Activated B cell treated with CpG ODN at 0.5 μM for 24 hours (primary cell): ENCODE measurements at regions of chr11 and their contacts with region 1.

Region 1: GRCh38 chr11:59753650-59754493 is 1.3 kb upstream of the STX3 start:
- DNase-seq: peak; percentile 73
- ATAC-seq: peak; percentile 66
- H3K4me3 Mint-ChIP-seq: peak overlapping the region; percentile 90
- H3K27ac Mint-ChIP-seq: peak overlapping the region; percentile 62
- H3K4me1 Mint-ChIP-seq: peaks cover 28% of the 10 kb centered on the region
- H3K27me3 Mint-ChIP-seq: peaks cover 9% of the 10 kb centered on the region
- CTCF ChIP-seq: peak; percentile 79

Region 2: GRCh38 chr11:59542142-59542810 is 211.6 kb before region 1 on chr11:
- CTCF ChIA-PET with region 1: interaction called, 4 read pairs
- POLR2A ChIA-PET with region 1: no interaction called
- intact Hi-C with region 1: loop called (anchors 1 kb)
- DNase-seq: no peak
- ATAC-seq: no peak
- H3K4me3 Mint-ChIP-seq: no peak overlapping the region
- H3K27ac Mint-ChIP-seq: no peak overlapping the region
- H3K4me1 Mint-ChIP-seq: peaks cover 3% of the 10 kb centered on the region
- H3K27me3 Mint-ChIP-seq: no peaks in the 10 kb centered on the region
- CTCF ChIP-seq: no peak

Region 3: DNA sequence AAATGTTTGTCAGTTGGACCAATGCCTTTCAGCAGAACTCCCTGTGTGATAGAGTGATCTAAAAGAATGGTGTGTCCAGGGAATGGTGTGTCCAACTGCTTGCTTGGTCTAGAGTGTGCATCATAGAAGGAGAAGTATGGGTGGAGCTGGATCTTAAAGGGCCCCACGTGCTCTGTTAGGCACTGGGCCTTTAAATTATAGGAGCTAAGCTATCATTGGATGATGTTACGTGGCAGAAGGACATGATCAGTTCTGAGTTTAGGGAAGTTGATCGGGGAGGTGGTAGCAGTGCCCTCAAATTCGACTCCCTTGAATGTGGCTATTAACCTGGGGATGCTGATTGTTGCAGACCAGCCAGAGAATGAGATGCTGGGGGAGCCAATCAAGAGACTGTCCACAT is 17.7 kb after region 1 on chr11:
- CTCF ChIA-PET with region 1: interaction called, 16 read pairs
- POLR2A ChIA-PET with region 1: interaction called, 43 read pairs
- intact Hi-C with region 1: loop called (anchors 1 kb)
- DNase-seq: no peak
- ATAC-seq: no peak
- H3K4me3 Mint-ChIP-seq: peak overlapping the region; percentile 62
- H3K27ac Mint-ChIP-seq: peak overlapping the region; percentile 92
- H3K4me1 Mint-ChIP-seq: peaks cover 35% of the 10 kb centered on the region
- H3K27me3 Mint-ChIP-seq: no peaks in the 10 kb centered on the region
- CTCF ChIP-seq: no peak

Region 4: DNA sequence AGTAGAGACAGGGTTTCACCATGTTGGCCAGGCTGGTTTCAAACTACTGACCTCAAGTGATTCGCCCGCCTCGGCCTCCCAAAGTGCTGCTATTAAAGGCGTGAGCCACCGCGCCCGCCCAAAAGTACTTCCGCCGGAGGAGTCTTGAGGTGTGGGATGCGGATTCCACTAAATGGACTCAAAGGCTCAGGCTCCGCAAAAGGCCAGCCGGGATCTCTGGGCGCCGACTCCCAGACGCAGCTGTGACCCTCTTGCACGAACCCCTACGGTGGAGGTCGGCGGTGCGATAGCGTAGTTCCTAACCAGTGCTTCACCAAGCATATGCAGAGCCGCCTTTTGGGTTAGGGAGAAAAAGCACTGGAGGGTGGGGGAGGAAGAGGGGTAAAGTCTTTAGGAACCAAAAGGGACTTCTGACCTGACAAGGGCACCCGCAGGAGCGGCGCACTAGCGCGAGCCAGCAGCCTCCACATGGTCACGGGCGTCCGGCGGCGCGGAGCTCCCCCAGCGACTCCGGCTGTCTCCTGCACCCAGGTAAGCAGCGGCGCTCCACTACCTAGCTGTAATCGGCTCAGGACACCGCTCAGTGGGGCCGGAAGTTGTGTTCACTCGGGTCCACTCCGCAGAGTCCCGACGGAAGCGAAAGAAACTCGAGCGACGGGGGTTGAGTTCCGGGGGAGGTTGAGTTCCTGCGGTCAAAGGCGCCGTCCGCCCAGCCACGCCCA is 56.5 kb after region 1 on chr11 and contains the start of gene MRPL16:
- CTCF ChIA-PET with region 1: interaction called, 112 read pairs
- POLR2A ChIA-PET with region 1: interaction called, 10 read pairs
- intact Hi-C with region 1: loop called (anchors 2 kb)
- DNase-seq: peak; percentile 81
- ATAC-seq: peak; percentile 98
- H3K4me3 Mint-ChIP-seq: peak within 1 kb of the TSS; percentile 92
- H3K27ac Mint-ChIP-seq: peak within 1 kb of the TSS; percentile 87
- H3K4me1 Mint-ChIP-seq: peaks cover 20% of the 10 kb centered on the region
- H3K27me3 Mint-ChIP-seq: peaks cover 3% of the 10 kb centered on the region
- CTCF ChIP-seq: no peak
- total RNA-seq, gene MRPL16: 56.4 and 57.7 TPM in 2 replicates

Region 5: DNA sequence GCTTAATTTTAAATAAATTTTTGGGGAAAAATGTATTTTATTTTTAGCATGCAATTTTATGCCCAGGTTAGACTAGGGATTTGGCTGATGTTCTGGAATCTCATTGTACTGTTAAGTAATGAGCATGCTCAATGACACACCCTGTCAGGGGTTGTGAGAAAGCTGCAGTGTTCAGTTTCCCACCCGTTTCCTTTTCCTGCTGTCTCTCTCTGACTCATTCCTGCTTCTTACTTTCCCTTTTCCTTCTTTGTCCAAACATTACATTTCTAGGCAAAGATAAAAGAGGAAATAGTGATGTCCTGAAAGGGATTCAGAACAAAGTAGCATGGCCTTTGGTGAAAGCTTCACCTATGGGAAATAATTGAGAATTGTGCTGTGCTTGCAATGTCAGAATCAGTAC is 147.4 kb after region 1 on chr11:
- CTCF ChIA-PET with region 1: no interaction called
- POLR2A ChIA-PET with region 1: no interaction called
- intact Hi-C with region 1: no loop called
- DNase-seq: no peak
- ATAC-seq: no peak
- H3K4me3 Mint-ChIP-seq: no peak overlapping the region
- H3K27ac Mint-ChIP-seq: no peak overlapping the region
- H3K4me1 Mint-ChIP-seq: no peaks in the 10 kb centered on the region
- H3K27me3 Mint-ChIP-seq: no peaks in the 10 kb centered on the region
- CTCF ChIP-seq: no peak

Region 6: GRCh38 chr11:60184824-60185511 is 431.1 kb after region 1 on chr11:
- CTCF ChIA-PET with region 1: no interaction called
- POLR2A ChIA-PET with region 1: no interaction called
- intact Hi-C with region 1: loop called (anchors 10 kb)
- DNase-seq: no peak
- ATAC-seq: peak; percentile 84
- H3K4me3 Mint-ChIP-seq: peak overlapping the region; percentile 7
- H3K27ac Mint-ChIP-seq: peak overlapping the region; percentile 54
- H3K4me1 Mint-ChIP-seq: peaks cover 54% of the 10 kb centered on the region
- H3K27me3 Mint-ChIP-seq: no peaks in the 10 kb centered on the region
- CTCF ChIP-seq: no peak